Common myeloid progenitor, CD34-positive (primary cell): ENCODE measurements at regions of chr10 and their contacts with region 1.

Region 1: GRCh38 chr10:113385021-113385999 is 167.5 kb upstream of the HABP2 start:
- DNase-seq: peak; percentile 83 to 90 (median 88)
- H3K4me3 ChIP-seq: peak overlapping the region in 1 of 7 experiments; percentile 19
- H3K27ac ChIP-seq: no peak overlapping the region
- H3K4me1 ChIP-seq: peaks cover 34 to 51% (median 39%) of the 10 kb centered on the region in 4 experiments
- H3K27me3 ChIP-seq: no peaks in the 10 kb centered on the region

Region 2: GRCh38 chr10:112689299-112690072 is 695.8 kb before region 1 on chr10:
- CTCF ChIA-PET with region 1: interaction called, 10 read pairs
- POLR2A ChIA-PET with region 1: no interaction called
- DNase-seq: peak; percentile 34 to 57 (median 47)
- H3K4me3 ChIP-seq: no peak overlapping the region
- H3K27ac ChIP-seq: no peak overlapping the region
- H3K4me1 ChIP-seq: peaks cover 0 to 4% (median 0%) of the 10 kb centered on the region in 4 experiments
- H3K27me3 ChIP-seq: no peaks in the 10 kb centered on the region

Region 3: GRCh38 chr10:113126229-113127201 is 258.8 kb before region 1 on chr10:
- CTCF ChIA-PET with region 1: interaction called, 13 read pairs
- POLR2A ChIA-PET with region 1: no interaction called
- DNase-seq: peak; percentile 65 to 81 (median 78)
- H3K4me3 ChIP-seq: peak overlapping the region in 4 of 7 experiments; percentile 40 to 71 (median 58)
- H3K27ac ChIP-seq: no peak overlapping the region
- H3K4me1 ChIP-seq: peaks cover 0 to 6% (median 3%) of the 10 kb centered on the region in 4 experiments
- H3K27me3 ChIP-seq: no peaks in the 10 kb centered on the region

Region 4: GRCh38 chr10:113216102-113216501 is 169.2 kb before region 1 on chr10:
- CTCF ChIA-PET with region 1: interaction called, 88 read pairs
- POLR2A ChIA-PET with region 1: interaction called, 12 read pairs
- DNase-seq: peak; percentile 54 to 75 (median 72)
- H3K4me3 ChIP-seq: peak overlapping the region in 1 of 7 experiments; percentile 10
- H3K27ac ChIP-seq: no peak overlapping the region
- H3K4me1 ChIP-seq: peaks cover 0 to 11% (median under 1%) of the 10 kb centered on the region in 4 experiments
- H3K27me3 ChIP-seq: no peaks in the 10 kb centered on the region

Region 5: DNA sequence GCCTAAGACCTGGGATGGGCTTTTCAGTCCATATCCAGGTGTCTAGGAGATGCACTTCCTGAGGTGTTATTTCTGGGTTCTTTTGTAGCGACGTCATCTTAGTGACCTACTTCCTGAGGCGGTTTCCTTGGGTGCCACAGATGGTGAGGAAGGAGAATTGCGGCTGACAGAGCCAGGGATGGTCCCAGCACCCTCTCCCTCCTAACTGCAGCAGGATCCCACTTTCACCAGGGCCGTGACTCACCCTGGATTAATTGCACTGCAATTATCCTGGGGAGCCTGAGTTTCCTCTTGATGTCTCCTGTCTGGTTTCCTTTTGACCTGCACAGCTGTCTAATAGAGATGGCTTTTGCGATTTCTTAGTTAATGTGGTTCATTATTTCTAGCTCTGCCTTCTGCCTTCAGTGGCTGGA is 163.5 kb before region 1 on chr10:
- CTCF ChIA-PET with region 1: interaction called, 88 read pairs
- POLR2A ChIA-PET with region 1: interaction called, 12 read pairs
- DNase-seq: peak; percentile 73 to 88 (median 82)
- H3K4me3 ChIP-seq: no peak overlapping the region
- H3K27ac ChIP-seq: no peak overlapping the region
- H3K4me1 ChIP-seq: peaks cover 6 to 32% (median 12%) of the 10 kb centered on the region in 4 experiments
- H3K27me3 ChIP-seq: no peaks in the 10 kb centered on the region

Region 6: GRCh38 chr10:113463777-113464176 is 78.5 kb after region 1 on chr10:
- CTCF ChIA-PET with region 1: no interaction called
- POLR2A ChIA-PET with region 1: no interaction called
- DNase-seq: no peak
- H3K4me3 ChIP-seq: no peak overlapping the region
- H3K27ac ChIP-seq: no peak overlapping the region
- H3K4me1 ChIP-seq: no peaks in the 10 kb centered on the region
- H3K27me3 ChIP-seq: no peaks in the 10 kb centered on the region